IMR-90 (cell line): ENCODE measurements at regions of chr2 and their contacts with region 1.

Region 1: GRCh38 chr2:129849559-129850160 is 129.8 kb upstream of the RAB6C start:
- DNase-seq: peak; percentile 78
- ATAC-seq: peak; percentile 94
- H3K4me3 ChIP-seq: no peak overlapping the region
- H3K27ac ChIP-seq: no peak overlapping the region
- H3K4me1 ChIP-seq: no peaks in the 10 kb centered on the region
- H3K27me3 ChIP-seq: no peaks in the 10 kb centered on the region
- CTCF ChIP-seq: peak; percentile 76
- POLR2A ChIP-seq: no peak
- RAD21 ChIP-seq: peak; percentile 69

Region 2: GRCh38 chr2:128062571-128062970 is 1787.1 kb before region 1 on chr2:
- CTCF ChIA-PET with region 1: no interaction called
- POLR2A ChIA-PET with region 1: no interaction called
- dilution Hi-C with region 1: no loop called
- in situ Hi-C with region 1: loop called (anchors 10 kb)
- intact Hi-C with region 1: loop called (anchors 1 kb)
- DNase-seq: no peak
- ATAC-seq: no peak
- H3K4me3 ChIP-seq: no peak overlapping the region
- H3K27ac ChIP-seq: no peak overlapping the region
- H3K4me1 ChIP-seq: no peaks in the 10 kb centered on the region
- H3K27me3 ChIP-seq: peaks cover 2% of the 10 kb centered on the region
- CTCF ChIP-seq: no peak
- POLR2A ChIP-seq: no peak
- RAD21 ChIP-seq: no peak

Region 3: DNA sequence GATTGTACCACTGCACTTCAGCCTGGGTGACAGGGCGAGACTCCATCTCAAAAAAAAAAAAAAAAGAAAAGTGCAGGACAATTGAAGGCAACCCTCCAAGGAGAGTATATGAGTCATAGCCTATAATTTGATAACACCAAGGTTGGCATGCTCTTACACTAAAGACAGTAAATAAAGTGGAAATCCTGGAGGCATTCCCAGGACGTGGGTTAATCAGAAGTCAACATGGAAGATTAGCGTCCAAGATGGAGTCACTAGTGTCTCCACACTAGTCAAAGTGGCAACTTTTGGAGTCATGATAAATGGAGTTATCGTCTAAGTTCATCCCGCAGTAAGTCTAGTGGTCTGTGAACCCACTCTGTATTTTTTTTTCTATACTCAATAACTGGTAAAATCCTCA is 1779.9 kb before region 1 on chr2:
- CTCF ChIA-PET with region 1: no interaction called
- POLR2A ChIA-PET with region 1: no interaction called
- dilution Hi-C with region 1: no loop called
- in situ Hi-C with region 1: loop called (anchors 10 kb)
- intact Hi-C with region 1: no loop called
- DNase-seq: peak; percentile 59
- ATAC-seq: peak; percentile 42
- H3K4me3 ChIP-seq: no peak overlapping the region
- H3K27ac ChIP-seq: no peak overlapping the region
- H3K4me1 ChIP-seq: no peaks in the 10 kb centered on the region
- H3K27me3 ChIP-seq: 0 out of 2 replicates have a peak, but pooled peaks cover 2% of the 10 kb centered on the region
- CTCF ChIP-seq: no peak
- POLR2A ChIP-seq: no peak
- RAD21 ChIP-seq: no peak

Region 4: GRCh38 chr2:128172191-128172590 is 1677.5 kb before region 1 on chr2:
- CTCF ChIA-PET with region 1: no interaction called
- POLR2A ChIA-PET with region 1: no interaction called
- dilution Hi-C with region 1: no loop called
- in situ Hi-C with region 1: loop called (anchors 25 kb)
- intact Hi-C with region 1: no loop called
- DNase-seq: peak; percentile 32
- ATAC-seq: peak; percentile 38
- H3K4me3 ChIP-seq: no peak overlapping the region
- H3K27ac ChIP-seq: no peak overlapping the region
- H3K4me1 ChIP-seq: peaks cover 8% of the 10 kb centered on the region
- H3K27me3 ChIP-seq: no peaks in the 10 kb centered on the region
- CTCF ChIP-seq: peak; percentile 44
- POLR2A ChIP-seq: no peak
- RAD21 ChIP-seq: peak; percentile 45

Region 5: GRCh38 chr2:128178650-128179460 is 1670.8 kb before region 1 on chr2:
- CTCF ChIA-PET with region 1: interaction called, 3 read pairs
- POLR2A ChIA-PET with region 1: no interaction called
- dilution Hi-C with region 1: no loop called
- in situ Hi-C with region 1: loop called (anchors 25 kb)
- intact Hi-C with region 1: loop called (anchors 2 kb)
- DNase-seq: peak; percentile 89
- ATAC-seq: peak; percentile 79
- H3K4me3 ChIP-seq: no peak overlapping the region
- H3K27ac ChIP-seq: peak overlapping the region; percentile 88; the same call in 1 of the 2 replicates
- H3K4me1 ChIP-seq: peaks cover 13% of the 10 kb centered on the region
- H3K27me3 ChIP-seq: no peaks in the 10 kb centered on the region
- CTCF ChIP-seq: peak; percentile 95
- POLR2A ChIP-seq: no peak
- RAD21 ChIP-seq: peak; percentile 89

Region 6: DNA sequence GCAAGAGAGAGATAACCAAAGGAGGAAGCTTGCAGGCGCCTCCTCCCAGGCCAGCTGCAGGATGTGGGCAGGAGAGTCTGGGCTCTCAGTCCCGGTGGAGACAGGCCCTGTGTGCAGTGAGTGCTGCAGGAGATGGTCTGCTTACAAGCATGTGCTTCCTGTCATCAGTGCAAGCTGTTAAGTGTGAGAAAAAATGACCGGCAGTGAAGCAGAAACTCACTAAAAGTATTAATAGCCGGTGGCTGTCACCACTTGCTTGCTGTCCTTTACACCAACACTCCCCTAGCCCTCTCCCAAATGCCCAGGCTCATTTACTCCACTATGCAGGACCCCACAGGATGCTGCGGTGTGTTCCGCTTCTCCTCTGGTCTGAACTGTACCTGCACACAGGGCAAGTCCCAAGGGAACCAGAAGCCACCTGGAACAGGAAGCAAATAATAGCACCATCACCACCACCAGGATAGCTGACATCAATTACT is 1095.4 kb before region 1 on chr2:
- CTCF ChIA-PET with region 1: no interaction called
- POLR2A ChIA-PET with region 1: no interaction called
- dilution Hi-C with region 1: no loop called
- in situ Hi-C with region 1: no loop called
- intact Hi-C with region 1: loop called (anchors 10 kb)
- DNase-seq: no peak
- ATAC-seq: no peak
- H3K4me3 ChIP-seq: no peak overlapping the region
- H3K27ac ChIP-seq: no peak overlapping the region
- H3K4me1 ChIP-seq: no peaks in the 10 kb centered on the region
- H3K27me3 ChIP-seq: peaks cover 15% of the 10 kb centered on the region
- CTCF ChIP-seq: no peak
- POLR2A ChIP-seq: no peak
- RAD21 ChIP-seq: no peak

Region 7: DNA sequence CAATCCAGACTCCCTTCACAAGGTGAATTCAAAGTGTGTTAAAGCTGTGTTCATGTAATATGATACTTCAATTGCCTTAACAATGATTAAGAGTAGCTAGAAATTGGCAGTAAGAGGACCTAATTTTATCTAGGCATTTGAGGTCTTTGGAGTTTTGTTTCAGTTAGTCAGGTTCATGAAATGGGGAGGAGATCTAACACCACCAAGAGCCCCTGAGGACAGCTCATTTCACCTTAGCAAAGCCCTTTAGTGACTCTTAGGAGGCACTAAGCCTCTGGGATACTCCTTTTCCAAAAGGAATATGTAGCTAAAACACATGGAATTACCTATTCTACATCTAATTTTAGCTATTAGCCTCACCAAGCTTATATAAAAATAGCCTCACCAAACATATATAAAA is 586.7 kb before region 1 on chr2:
- CTCF ChIA-PET with region 1: no interaction called
- POLR2A ChIA-PET with region 1: no interaction called
- dilution Hi-C with region 1: no loop called
- in situ Hi-C with region 1: no loop called
- intact Hi-C with region 1: no loop called
- DNase-seq: no peak
- ATAC-seq: no peak
- H3K4me3 ChIP-seq: no peak overlapping the region
- H3K27ac ChIP-seq: no peak overlapping the region
- H3K4me1 ChIP-seq: no peaks in the 10 kb centered on the region
- H3K27me3 ChIP-seq: no peaks in the 10 kb centered on the region
- CTCF ChIP-seq: no peak
- POLR2A ChIP-seq: no peak
- RAD21 ChIP-seq: no peak